CD8-positive, alpha-beta T cell (primary cell): ENCODE measurements at regions of chr16 and their contacts with region 1.

Region 1: GRCh38 chr16:9090960-9091866 is at the start of gene HAPSTR1:
- DNase-seq: peak; percentile 98 to 100 (median 99)
- ATAC-seq: peak; percentile 85
- H3K4me3 ChIP-seq: peak within 1 kb of the TSS; percentile 85 to 93
- H3K4me3 Mint-ChIP-seq: peak within 1 kb of the TSS; percentile 99
- H3K27ac ChIP-seq: peak within 1 kb of the TSS; percentile 82 to 92
- H3K27ac Mint-ChIP-seq: peak within 1 kb of the TSS; percentile 99
- H3K4me1 ChIP-seq: peaks cover 37% of the 10 kb centered on the region
- H3K4me1 Mint-ChIP-seq: peaks cover 34% of the 10 kb centered on the region
- H3K27me3 ChIP-seq: no peaks in the 10 kb centered on the region
- H3K27me3 Mint-ChIP-seq: no peaks in the 10 kb centered on the region
- CTCF ChIP-seq: no peak
- total RNA-seq, gene HAPSTR1: 189 to 191 TPM

Region 2: GRCh38 chr16:8621572-8622314 is 469.5 kb before region 1 on chr16 and contains the start of gene METTL22:
- CTCF ChIA-PET with region 1: no interaction called
- POLR2A ChIA-PET with region 1: no interaction called
- intact Hi-C with region 1: loop called (anchors 5 kb)
- DNase-seq: peak; percentile 83 to 96 (median 91)
- ATAC-seq: peak; percentile 98
- H3K4me3 ChIP-seq: peak within 1 kb of the TSS; percentile 90 to 100
- H3K4me3 Mint-ChIP-seq: peak within 1 kb of the TSS; percentile 94
- H3K27ac ChIP-seq: peak within 1 kb of the TSS; percentile 83 to 84
- H3K27ac Mint-ChIP-seq: peak within 1 kb of the TSS; percentile 92
- H3K4me1 ChIP-seq: peaks cover 11% of the 10 kb centered on the region
- H3K4me1 Mint-ChIP-seq: peaks cover 20% of the 10 kb centered on the region
- H3K27me3 ChIP-seq: no peaks in the 10 kb centered on the region
- H3K27me3 Mint-ChIP-seq: no peaks in the 10 kb centered on the region
- CTCF ChIP-seq: no peak
- total RNA-seq, gene METTL22: 30.0 to 30.8 TPM

Region 3: GRCh38 chr16:8868416-8869211 is 222.6 kb before region 1 on chr16 and contains the start of gene CARHSP1:
- CTCF ChIA-PET with region 1: no interaction called
- POLR2A ChIA-PET with region 1: interaction called, 23 read pairs
- intact Hi-C with region 1: loop called (anchors 1 to 5 kb)
- DNase-seq: peak; percentile 55 to 90 (median 75)
- ATAC-seq: peak; percentile 76
- H3K4me3 ChIP-seq: peak within 1 kb of the TSS; percentile 68 to 72
- H3K4me3 Mint-ChIP-seq: peak within 1 kb of the TSS; percentile 97
- H3K27ac ChIP-seq: peak within 1 kb of the TSS; percentile 41 to 52
- H3K27ac Mint-ChIP-seq: peak within 1 kb of the TSS; percentile 93
- H3K4me1 ChIP-seq: peaks cover 53% of the 10 kb centered on the region
- H3K4me1 Mint-ChIP-seq: peaks cover 57% of the 10 kb centered on the region
- H3K27me3 ChIP-seq: no peaks in the 10 kb centered on the region
- H3K27me3 Mint-ChIP-seq: no peaks in the 10 kb centered on the region
- CTCF ChIP-seq: no peak
- total RNA-seq, gene CARHSP1: 28.0 to 33.3 TPM

Region 4: DNA sequence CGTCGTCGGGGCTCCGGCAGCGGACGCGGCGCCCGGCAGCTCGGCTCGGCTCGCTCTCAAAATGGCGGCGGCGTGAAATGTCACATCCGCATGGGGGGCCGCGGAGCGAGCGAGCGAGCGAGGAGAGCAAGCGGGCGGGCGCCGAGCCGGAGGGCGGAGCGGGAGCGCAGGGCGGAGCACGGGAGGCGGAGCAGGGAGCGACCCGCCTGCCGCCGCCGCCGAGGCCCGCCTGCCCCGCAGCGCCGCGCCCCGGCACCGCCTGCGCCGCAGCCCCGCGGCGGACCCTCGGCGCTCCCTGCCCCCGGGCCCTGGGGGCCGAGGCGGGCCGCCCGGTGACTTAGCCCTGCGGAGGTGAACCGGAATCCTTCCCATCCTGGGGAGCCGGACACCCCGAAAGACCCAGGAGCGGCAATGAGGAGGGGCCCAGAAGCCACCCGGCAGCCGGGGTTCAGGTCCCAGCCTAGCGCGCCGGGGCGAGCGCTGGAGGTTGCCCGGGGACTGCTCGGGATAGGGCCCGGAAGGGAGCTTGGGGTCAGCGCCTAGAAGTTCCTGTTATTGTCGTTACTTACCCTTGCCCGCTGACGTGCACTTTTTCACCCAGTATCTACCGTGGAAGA is 127.3 kb before region 1 on chr16 and contains the start of gene USP7:
- CTCF ChIA-PET with region 1: no interaction called
- POLR2A ChIA-PET with region 1: interaction called, 12 read pairs
- intact Hi-C with region 1: loop called (anchors 1 kb)
- DNase-seq: peak; percentile 84 to 95 (median 92)
- ATAC-seq: peak; percentile 92
- H3K4me3 ChIP-seq: peak within 1 kb of the TSS; percentile 67 to 73
- H3K4me3 Mint-ChIP-seq: peak within 1 kb of the TSS; percentile 96
- H3K27ac ChIP-seq: peak within 1 kb of the TSS; percentile 72 to 76
- H3K27ac Mint-ChIP-seq: peak within 1 kb of the TSS; percentile 95
- H3K4me1 ChIP-seq: peaks cover 31% of the 10 kb centered on the region
- H3K4me1 Mint-ChIP-seq: peaks cover 38% of the 10 kb centered on the region
- H3K27me3 ChIP-seq: no peaks in the 10 kb centered on the region
- H3K27me3 Mint-ChIP-seq: no peaks in the 10 kb centered on the region
- CTCF ChIP-seq: no peak
- total RNA-seq, gene USP7: 301 to 317 TPM

Region 5: DNA sequence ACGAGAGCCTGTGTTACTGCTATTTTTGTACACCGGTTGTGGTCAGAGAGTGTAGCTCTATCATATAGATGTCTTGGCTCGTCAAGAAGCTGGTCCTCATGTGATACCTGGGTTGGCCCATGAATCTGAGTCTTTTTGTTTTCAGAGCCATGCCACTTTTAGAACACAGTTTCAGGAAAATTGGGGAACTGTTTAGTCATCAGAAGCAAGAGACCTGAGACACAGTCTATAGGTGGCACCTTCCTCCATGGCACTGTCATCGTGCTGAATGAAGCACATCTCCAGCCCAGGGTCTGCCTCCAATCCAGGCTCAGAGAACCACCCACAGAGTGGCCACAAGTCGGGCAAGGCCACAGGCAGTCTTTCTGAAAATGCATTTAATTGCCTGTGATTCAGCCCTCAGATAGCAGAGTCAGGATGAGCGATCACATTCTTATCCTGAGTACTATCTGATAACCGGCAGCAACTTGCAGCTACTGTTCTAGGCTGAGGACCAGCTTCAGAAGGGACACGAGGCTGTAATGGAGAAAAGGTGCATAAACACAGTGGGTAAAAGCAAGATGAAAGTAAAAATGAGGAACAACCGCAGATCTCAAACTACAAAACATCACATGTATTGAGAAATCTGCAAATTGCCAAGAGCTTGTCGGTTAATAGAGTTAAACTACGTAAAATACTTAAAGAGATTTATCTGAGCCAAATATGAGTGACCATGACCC is 14.0 kb before region 1 on chr16:
- CTCF ChIA-PET with region 1: no interaction called
- POLR2A ChIA-PET with region 1: interaction called, 35 read pairs
- intact Hi-C with region 1: loop called in 1 of 2 experiments (anchors 1 kb)
- DNase-seq: no peak
- ATAC-seq: no peak
- H3K4me3 ChIP-seq: no peak overlapping the region
- H3K4me3 Mint-ChIP-seq: no peak overlapping the region
- H3K27ac ChIP-seq: no peak overlapping the region
- H3K27ac Mint-ChIP-seq: no peak overlapping the region
- H3K4me1 ChIP-seq: no peaks in the 10 kb centered on the region
- H3K4me1 Mint-ChIP-seq: peaks cover 18% of the 10 kb centered on the region
- H3K27me3 ChIP-seq: no peaks in the 10 kb centered on the region
- H3K27me3 Mint-ChIP-seq: no peaks in the 10 kb centered on the region
- CTCF ChIP-seq: no peak

Region 6: DNA sequence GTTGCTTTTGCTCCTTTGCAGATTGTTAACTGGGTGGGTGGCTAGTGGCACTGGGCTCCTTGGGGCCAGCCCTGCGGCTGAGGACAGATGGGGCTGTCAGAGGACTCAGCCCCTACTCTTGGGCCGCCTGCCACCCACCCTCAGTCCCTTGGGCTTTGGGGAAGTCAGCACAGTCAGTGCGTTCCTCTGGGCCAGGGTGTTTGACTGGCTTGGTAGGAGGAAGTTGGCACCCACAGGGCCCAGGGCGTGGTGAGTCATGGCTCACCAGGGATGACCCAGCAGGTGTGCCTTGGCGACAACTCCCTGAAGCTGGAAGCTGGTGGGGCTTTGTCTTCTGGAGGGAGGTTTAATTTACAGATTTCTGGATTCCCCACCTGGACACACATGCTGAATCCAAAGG is 32.7 kb after region 1 on chr16:
- CTCF ChIA-PET with region 1: no interaction called
- POLR2A ChIA-PET with region 1: interaction called, 8 read pairs
- intact Hi-C with region 1: loop called (anchors 2 to 5 kb)
- DNase-seq: peak in 2 of 9 experiments; percentile 20 to 43
- ATAC-seq: no peak
- H3K4me3 ChIP-seq: no peak overlapping the region
- H3K4me3 Mint-ChIP-seq: no peak overlapping the region
- H3K27ac ChIP-seq: no peak overlapping the region
- H3K27ac Mint-ChIP-seq: peak overlapping the region; percentile 82
- H3K4me1 ChIP-seq: peaks cover 40% of the 10 kb centered on the region
- H3K4me1 Mint-ChIP-seq: peaks cover 63% of the 10 kb centered on the region
- H3K27me3 ChIP-seq: no peaks in the 10 kb centered on the region
- H3K27me3 Mint-ChIP-seq: no peaks in the 10 kb centered on the region
- CTCF ChIP-seq: no peak